Panc1 (cell line): ENCODE measurements at regions of chr16 and their contacts with region 1.

Region 1: GRCh38 chr16:70454222-70455034 is at the start of gene FCSK:
- DNase-seq: no peak
- ATAC-seq: peak; percentile 96
- H3K4me3 ChIP-seq: peak within 1 kb of the TSS; percentile 78 to 84
- H3K27ac ChIP-seq: peak within 1 kb of the TSS; percentile 96
- H3K4me1 ChIP-seq: peaks cover 5% of the 10 kb centered on the region
- H3K27me3 ChIP-seq: no peaks in the 10 kb centered on the region
- CTCF ChIP-seq: no peak
- total RNA-seq, gene FCSK: 16.9 TPM

Region 2: GRCh38 chr16:70395345-70395901 is 59.0 kb before region 1 on chr16:
- CTCF ChIA-PET with region 1: no interaction called
- POLR2A ChIA-PET with region 1: no interaction called
- in situ Hi-C with region 1: no loop called
- intact Hi-C with region 1: loop called (anchors 10 kb)
- DNase-seq: no peak
- ATAC-seq: peak; percentile 87
- H3K4me3 ChIP-seq: no peak overlapping the region
- H3K27ac ChIP-seq: no peak overlapping the region
- H3K4me1 ChIP-seq: peaks cover 2% of the 10 kb centered on the region; the same call in 1 of the 2 replicates
- H3K27me3 ChIP-seq: no peaks in the 10 kb centered on the region
- CTCF ChIP-seq: peak; percentile 83; the same call in 1 of the 2 replicates

Region 3: DNA sequence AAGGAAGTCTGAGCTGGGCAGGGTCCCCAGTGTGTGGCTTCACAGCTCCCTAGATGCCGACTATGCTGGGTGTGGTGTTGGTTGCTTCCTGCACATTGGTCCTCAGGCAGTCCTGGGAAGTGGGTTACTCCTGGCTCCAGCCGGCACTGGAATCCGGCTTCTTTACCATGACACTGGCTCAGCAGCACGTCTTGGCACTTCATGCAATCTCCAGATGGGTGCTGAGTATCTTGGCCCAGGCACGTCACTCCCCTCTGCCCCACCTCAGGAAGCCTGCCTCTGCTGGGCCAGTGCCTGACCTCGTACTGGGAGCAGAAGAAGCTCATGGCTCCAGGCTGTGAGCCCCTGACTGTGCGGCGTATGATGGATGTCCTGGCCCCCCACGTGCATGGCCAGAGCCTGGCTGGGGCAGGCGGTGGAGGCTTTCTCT is 24.5 kb after region 1 on chr16:
- CTCF ChIA-PET with region 1: no interaction called
- POLR2A ChIA-PET with region 1: no interaction called
- in situ Hi-C with region 1: no loop called
- intact Hi-C with region 1: no loop called
- DNase-seq: no peak
- ATAC-seq: no peak
- H3K4me3 ChIP-seq: no peak overlapping the region
- H3K27ac ChIP-seq: no peak overlapping the region
- H3K4me1 ChIP-seq: peaks cover 11% of the 10 kb centered on the region
- H3K27me3 ChIP-seq: no peaks in the 10 kb centered on the region
- CTCF ChIP-seq: no peak

Region 4: GRCh38 chr16:70523743-70524400 is 69.4 kb after region 1 on chr16 and contains the start of gene SF3B3:
- CTCF ChIA-PET with region 1: no interaction called
- POLR2A ChIA-PET with region 1: interaction called, 11 read pairs
- in situ Hi-C with region 1: no loop called
- intact Hi-C with region 1: no loop called
- DNase-seq: peak; percentile 30
- ATAC-seq: peak; percentile 83
- H3K4me3 ChIP-seq: peak within 1 kb of the TSS; percentile 79 to 99
- H3K27ac ChIP-seq: peak within 1 kb of the TSS; percentile 99
- H3K4me1 ChIP-seq: peaks cover 15% of the 10 kb centered on the region
- H3K27me3 ChIP-seq: no peaks in the 10 kb centered on the region
- CTCF ChIP-seq: no peak
- total RNA-seq, gene SF3B3: 253 TPM